ENCODE measurements at regions of chr13 and their contacts with region 1.

Region 1: DNA sequence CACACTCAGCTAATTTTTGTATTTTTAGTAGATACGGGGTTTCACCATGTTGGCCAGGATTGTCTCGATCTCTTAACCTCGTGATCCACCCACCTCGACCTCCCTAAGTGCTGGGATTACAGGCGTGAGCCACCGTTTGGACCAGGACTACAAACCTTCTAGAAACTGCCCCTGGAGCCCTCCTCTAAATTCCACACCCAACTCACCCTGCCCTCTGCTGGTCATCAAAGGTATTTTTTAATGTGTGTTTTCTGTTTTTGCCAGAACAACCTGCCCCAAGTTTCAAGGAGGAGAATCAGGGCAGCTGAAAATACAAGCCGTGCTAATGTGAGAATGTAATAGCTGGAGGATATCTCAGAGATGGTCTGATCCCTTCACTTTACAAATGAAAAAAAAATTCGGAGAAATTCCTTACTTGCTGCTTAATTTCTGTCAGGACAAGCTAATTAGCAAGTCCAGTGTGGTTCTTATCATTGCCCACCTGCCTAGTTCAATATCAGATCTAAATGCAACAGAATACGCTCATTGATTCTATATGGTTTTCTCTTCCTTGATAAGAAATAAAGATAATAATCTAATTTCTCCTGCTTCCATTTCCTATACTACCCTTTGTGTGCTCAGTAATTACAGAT is 4.1 kb downstream of the ATP8A2 start:
- DNase-seq: peak in 1 of 2 experiments; percentile 18
- H3K4me3 ChIP-seq: no peak overlapping the region
- H3K27ac ChIP-seq: no peak overlapping the region
- H3K4me1 ChIP-seq: no peaks in the 10 kb centered on the region
- H3K27me3 ChIP-seq: peaks cover 51% of the 10 kb centered on the region; the same call in 1 of the 2 replicates
- CTCF ChIP-seq: peak; percentile 92

Region 2: DNA sequence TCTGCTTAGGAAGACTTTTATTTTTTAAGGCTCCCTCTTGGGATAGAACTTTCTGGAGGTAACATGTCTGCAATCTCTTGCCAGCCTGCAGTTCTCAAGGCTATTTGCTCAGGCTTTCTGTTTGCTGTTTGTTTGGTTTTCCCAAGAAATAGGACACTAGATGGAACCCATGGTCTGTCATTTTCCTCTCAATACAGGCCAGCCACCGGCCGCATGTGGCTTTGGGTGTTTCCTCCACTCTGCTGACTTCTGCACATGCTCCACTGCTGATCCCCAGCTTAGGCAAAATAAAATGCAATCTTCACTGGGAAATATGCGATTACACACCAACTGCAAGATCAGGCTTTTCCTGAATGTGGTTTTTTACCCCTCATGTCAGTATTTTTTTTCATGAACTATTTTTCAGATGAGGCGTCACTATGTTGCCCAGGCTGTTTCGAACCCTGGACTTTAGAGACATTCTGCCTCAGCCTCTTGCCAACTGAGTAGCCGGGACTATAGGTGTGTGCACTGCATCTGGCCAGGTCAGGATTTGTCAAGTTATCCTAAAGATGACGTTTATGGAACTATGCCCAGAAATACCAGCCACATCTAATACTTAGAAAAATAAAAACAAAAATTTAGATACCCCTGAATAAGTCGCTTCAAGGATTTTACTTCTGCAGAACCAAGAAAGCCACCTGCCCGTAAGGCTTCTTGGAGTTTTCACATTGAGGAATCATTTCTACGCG is 374.2 kb before region 1 on chr13:
- CTCF ChIA-PET with region 1: no interaction called
- POLR2A ChIA-PET with region 1: no interaction called
- intact Hi-C with region 1: loop called (anchors 10 kb)
- DNase-seq: no peak
- H3K4me3 ChIP-seq: no peak overlapping the region
- H3K27ac ChIP-seq: no peak overlapping the region
- H3K4me1 ChIP-seq: peaks cover 13% of the 10 kb centered on the region
- H3K27me3 ChIP-seq: no peaks in the 10 kb centered on the region
- CTCF ChIP-seq: no peak

Region 3: DNA sequence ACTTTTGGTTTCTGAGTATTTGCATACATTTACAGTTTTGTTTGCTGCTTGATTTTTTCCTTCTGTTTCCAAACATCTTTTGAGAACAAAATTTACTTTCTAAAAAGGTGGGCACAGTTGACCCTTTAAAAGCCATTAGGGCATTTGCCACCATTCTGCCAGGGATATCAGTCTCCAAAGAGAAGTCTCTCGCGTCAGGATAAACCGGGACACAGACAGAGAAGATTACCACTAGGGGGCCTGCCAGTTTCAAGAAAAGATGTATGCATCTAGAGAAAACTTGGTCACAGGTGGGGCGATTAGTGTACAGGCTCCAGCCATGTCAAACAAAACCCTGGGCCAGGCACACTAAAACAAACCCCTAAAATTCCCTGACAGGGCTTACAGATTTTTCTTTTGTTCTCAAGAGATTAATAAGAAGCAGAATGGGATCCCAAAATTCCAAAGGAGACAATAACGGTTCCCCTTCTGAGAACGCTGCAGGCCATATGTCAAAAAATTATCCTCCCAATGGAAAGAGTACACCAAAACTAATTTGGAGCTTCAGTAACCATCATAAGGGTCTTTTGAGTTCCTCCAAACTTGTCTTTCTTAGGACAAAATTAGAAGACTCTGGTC is 290.6 kb before region 1 on chr13:
- CTCF ChIA-PET with region 1: no interaction called
- POLR2A ChIA-PET with region 1: no interaction called
- intact Hi-C with region 1: loop called (anchors 10 kb)
- DNase-seq: peak in 1 of 2 experiments; percentile 10
- H3K4me3 ChIP-seq: no peak overlapping the region
- H3K27ac ChIP-seq: no peak overlapping the region
- H3K4me1 ChIP-seq: no peaks in the 10 kb centered on the region
- H3K27me3 ChIP-seq: peaks cover 26% of the 10 kb centered on the region
- CTCF ChIP-seq: peak; percentile 73

Region 4: DNA sequence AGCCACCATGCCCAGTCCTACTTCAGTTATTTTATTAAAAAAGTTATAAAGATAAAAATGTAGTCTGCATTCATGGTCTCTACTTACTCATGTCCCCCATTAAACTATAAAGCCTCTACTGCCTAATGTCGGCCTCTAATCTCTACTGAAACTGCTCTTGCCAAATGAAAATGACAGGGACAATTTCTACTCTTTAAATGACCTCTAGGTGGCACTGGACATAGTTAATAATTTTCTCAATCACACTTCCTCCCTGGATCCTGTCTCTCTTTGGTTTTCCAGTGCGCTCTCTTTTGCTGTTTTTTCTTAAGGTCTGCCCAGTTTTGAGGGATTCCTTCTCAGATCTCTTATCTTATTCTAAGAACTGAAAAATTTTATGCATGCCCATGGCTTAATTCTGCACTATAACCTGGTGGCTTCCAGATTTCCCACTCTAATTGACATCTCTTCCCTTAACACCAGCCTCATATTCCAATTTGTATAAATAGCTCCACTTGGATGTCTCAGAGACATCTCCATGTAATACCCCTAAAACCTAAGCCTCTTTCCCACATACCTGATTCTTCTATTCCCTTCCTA is 142.8 kb before region 1 on chr13:
- CTCF ChIA-PET with region 1: no interaction called
- POLR2A ChIA-PET with region 1: no interaction called
- intact Hi-C with region 1: loop called (anchors 5 kb)
- DNase-seq: no peak
- H3K4me3 ChIP-seq: no peak overlapping the region
- H3K27ac ChIP-seq: no peak overlapping the region
- H3K4me1 ChIP-seq: no peaks in the 10 kb centered on the region
- H3K27me3 ChIP-seq: peaks cover 25% of the 10 kb centered on the region
- CTCF ChIP-seq: peak; percentile 70

Measured in PC-9 (cell line).